Naive thymus-derived CD4-positive, alpha-beta T cell (primary cell): ENCODE measurements at regions of chr5 and their contacts with region 1.

Region 1: GRCh38 chr5:149618581-149619251 is 37.4 kb downstream of the ARHGEF37 start:
- DNase-seq: peak in 4 of 9 donors; percentile 10 to 21 (median 16)
- ATAC-seq: peak; percentile 51
- H3K4me3 ChIP-seq: no peak overlapping the region
- H3K4me3 Mint-ChIP-seq: no peak overlapping the region
- H3K27ac ChIP-seq: no peak overlapping the region
- H3K27ac Mint-ChIP-seq: no peak overlapping the region
- H3K4me1 ChIP-seq: no peaks in the 10 kb centered on the region
- H3K4me1 Mint-ChIP-seq: peaks cover 0 to 16% (median 0%) of the 10 kb centered on the region in 7 donors
- H3K27me3 ChIP-seq: no peaks in the 10 kb centered on the region
- H3K27me3 Mint-ChIP-seq: no peaks in the 10 kb centered on the region

Region 2: DNA sequence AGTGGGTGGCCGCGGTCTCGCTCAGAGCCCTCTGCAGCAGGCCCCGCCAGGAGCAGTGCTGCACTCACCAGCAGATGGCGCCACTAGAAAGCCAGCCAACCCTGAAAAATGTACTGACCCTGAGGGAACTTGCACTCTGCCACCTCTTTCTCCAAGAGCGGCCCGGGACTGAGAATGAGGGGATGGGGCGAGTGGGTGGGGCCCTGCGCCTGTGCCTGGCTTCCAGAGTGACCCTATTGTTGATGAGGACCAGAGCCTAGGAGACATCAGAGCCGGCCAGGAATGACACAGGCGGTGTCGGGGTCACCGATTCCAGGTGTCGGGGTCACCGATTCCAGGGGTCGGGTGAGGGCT is 236.8 kb before region 1 on chr5:
- CTCF ChIA-PET with region 1: no interaction called
- POLR2A ChIA-PET with region 1: no interaction called
- intact Hi-C with region 1: loop called in 1 of 2 experiments (anchors 1 kb)
- DNase-seq: peak; percentile 41 to 76 (median 62)
- ATAC-seq: peak; percentile 85
- H3K4me3 ChIP-seq: no peak overlapping the region
- H3K4me3 Mint-ChIP-seq: peak overlapping the region in 1 of 10 donors; percentile 46
- H3K27ac ChIP-seq: no peak overlapping the region
- H3K27ac Mint-ChIP-seq: no peak overlapping the region
- H3K4me1 ChIP-seq: no peaks in the 10 kb centered on the region
- H3K4me1 Mint-ChIP-seq: peaks cover 0 to 5% (median 4%) of the 10 kb centered on the region in 7 donors
- H3K27me3 ChIP-seq: no peaks in the 10 kb centered on the region
- H3K27me3 Mint-ChIP-seq: no peaks in the 10 kb centered on the region

Region 3: GRCh38 chr5:149442563-149443182 is 176.0 kb before region 1 on chr5:
- CTCF ChIA-PET with region 1: no interaction called
- POLR2A ChIA-PET with region 1: no interaction called
- intact Hi-C with region 1: loop called in 1 of 2 experiments (anchors 1 kb)
- DNase-seq: peak; percentile 16 to 82 (median 51)
- ATAC-seq: peak; percentile 81
- H3K4me3 ChIP-seq: no peak overlapping the region
- H3K4me3 Mint-ChIP-seq: no peak overlapping the region
- H3K27ac ChIP-seq: no peak overlapping the region
- H3K27ac Mint-ChIP-seq: peak overlapping the region in 3 of 9 donors; percentile 2 to 52 (median 15)
- H3K4me1 ChIP-seq: no peaks in the 10 kb centered on the region
- H3K4me1 Mint-ChIP-seq: peaks cover 1 to 20% (median 12%) of the 10 kb centered on the region in 7 donors
- H3K27me3 ChIP-seq: no peaks in the 10 kb centered on the region
- H3K27me3 Mint-ChIP-seq: no peaks in the 10 kb centered on the region

Region 4: GRCh38 chr5:149581192-149581861 is 37.4 kb before region 1 on chr5 and contains the start of gene ARHGEF37:
- CTCF ChIA-PET with region 1: no interaction called
- POLR2A ChIA-PET with region 1: no interaction called
- intact Hi-C with region 1: loop called in 1 of 2 experiments (anchors 5 kb)
- DNase-seq: peak; percentile 21 to 60 (median 40)
- ATAC-seq: peak; percentile 81
- H3K4me3 ChIP-seq: peak within 1 kb of the TSS; percentile 51
- H3K4me3 Mint-ChIP-seq: peak within 1 kb of the TSS; percentile 78 to 88 (median 80)
- H3K27ac ChIP-seq: no peak within 1 kb of the TSS
- H3K27ac Mint-ChIP-seq: peak within 1 kb of the TSS in 6 of 9 donors; percentile 33 to 68 (median 54)
- H3K4me1 ChIP-seq: peaks cover 0 to 8% of the 10 kb centered on the region in 2 donors
- H3K4me1 Mint-ChIP-seq: peaks cover 0 to 23% (median 13%) of the 10 kb centered on the region in 7 donors
- H3K27me3 ChIP-seq: no peaks in the 10 kb centered on the region
- H3K27me3 Mint-ChIP-seq: peaks cover 0 to 22% (median 0%) of the 10 kb centered on the region in 5 donors
- total RNA-seq, gene ARHGEF37: 0.43 to 1.8 (median 0.80) TPM in 4 of 5 experiments, not detected in the other